Activated naive CD4-positive, alpha-beta T cell treated with anti-CD3 and anti-CD28 coated beads for 36 hours (primary cell): ENCODE measurements at regions of chr1 and their contacts with region 1.

Region 1: GRCh38 chr1:246689409-246690008 is 34.7 kb upstream of the SCCPDH start:
- DNase-seq: peak; percentile 52
- H3K4me3 Mint-ChIP-seq: no peak overlapping the region
- H3K27ac Mint-ChIP-seq: no peak overlapping the region
- H3K4me1 Mint-ChIP-seq: peaks cover 2% of the 10 kb centered on the region
- H3K27me3 Mint-ChIP-seq: no peaks in the 10 kb centered on the region

Region 2: DNA sequence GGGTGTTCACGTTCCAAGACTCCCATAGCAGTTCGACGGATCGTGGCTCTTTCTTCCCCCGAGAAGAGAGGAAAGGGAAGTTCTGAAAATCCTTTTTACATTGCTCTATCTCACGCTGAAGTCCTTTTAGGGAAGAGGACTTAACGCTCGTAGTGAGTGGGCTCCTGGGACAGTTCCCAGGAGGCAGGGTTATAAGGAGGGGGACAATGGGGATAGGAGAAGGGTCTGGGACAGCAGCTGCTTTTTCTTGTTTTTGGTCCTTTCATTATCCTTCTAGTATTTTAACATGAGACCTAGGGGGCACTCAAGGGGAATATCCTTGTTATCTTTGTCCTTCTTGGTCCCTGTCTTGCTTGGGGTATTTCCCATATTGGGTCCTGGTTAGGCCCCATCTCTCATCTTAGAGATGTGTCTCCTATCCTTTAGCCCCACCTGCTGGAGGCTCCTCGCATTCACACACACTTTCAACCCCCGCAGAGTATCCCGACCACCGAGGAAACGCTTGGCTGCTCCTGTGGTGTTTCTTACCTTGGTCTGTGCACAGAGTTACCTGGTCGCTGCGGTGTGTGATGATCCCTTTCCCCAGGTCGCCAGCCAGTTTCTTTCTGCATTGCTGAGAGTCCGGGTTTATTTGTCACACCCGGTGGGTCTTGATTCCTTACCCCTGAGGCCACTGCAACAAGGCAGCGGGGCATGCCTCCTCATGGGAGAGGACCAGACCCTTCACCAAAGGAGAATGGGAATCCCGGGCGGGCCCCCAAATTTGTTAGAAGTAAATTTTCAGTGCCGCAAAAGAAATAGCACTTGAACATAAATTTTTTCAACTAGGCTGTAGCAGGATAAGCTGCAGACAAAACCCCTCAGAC is 64.4 kb after region 1 on chr1:
- CTCF ChIA-PET with region 1: interaction called, 4 read pairs
- intact Hi-C with region 1: loop called (anchors 1 kb)
- DNase-seq: peak; percentile 72
- H3K4me3 Mint-ChIP-seq: no peak overlapping the region
- H3K27ac Mint-ChIP-seq: no peak overlapping the region
- H3K4me1 Mint-ChIP-seq: no peaks in the 10 kb centered on the region
- H3K27me3 Mint-ChIP-seq: no peaks in the 10 kb centered on the region

Region 3: DNA sequence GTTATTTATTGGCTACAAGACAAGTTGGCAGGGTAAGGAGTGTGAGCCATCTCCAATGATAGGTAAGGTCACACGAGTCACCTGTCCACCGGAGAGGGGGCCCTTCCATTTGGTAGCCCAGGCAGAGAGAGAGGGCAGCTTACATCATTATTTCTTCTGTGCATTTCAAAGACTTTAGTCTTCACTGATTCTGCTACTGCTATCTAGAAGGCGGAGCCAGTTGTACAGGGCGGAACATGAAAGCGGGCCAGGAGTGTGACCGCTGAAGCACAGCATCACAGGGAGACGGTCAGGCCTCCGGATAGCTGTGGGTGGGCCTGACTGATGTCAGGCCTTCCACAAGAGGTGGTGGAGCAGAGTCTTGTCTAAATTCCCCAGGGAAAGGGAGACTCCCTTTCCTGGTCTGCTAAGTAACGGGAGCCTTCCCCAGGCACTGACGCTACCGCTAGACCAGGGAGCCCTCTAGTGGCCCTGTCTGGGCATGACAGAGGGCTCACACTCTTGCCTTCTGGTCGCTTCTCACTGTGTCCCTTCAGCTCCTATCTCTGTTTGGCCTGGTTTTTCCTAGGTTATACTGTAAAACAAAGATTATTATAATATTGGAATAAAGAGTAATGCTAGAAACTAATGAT is 281.7 kb after region 1 on chr1:
- CTCF ChIA-PET with region 1: no interaction called
- intact Hi-C with region 1: loop called (anchors 2 kb)
- DNase-seq: peak; percentile 55
- H3K4me3 Mint-ChIP-seq: no peak overlapping the region
- H3K27ac Mint-ChIP-seq: no peak overlapping the region
- H3K4me1 Mint-ChIP-seq: no peaks in the 10 kb centered on the region
- H3K27me3 Mint-ChIP-seq: peaks cover 3% of the 10 kb centered on the region

Region 4: GRCh38 chr1:247198781-247199180 is 509.3 kb after region 1 on chr1:
- CTCF ChIA-PET with region 1: no interaction called
- intact Hi-C with region 1: no loop called
- DNase-seq: no peak
- H3K4me3 Mint-ChIP-seq: no peak overlapping the region
- H3K27ac Mint-ChIP-seq: no peak overlapping the region
- H3K4me1 Mint-ChIP-seq: no peaks in the 10 kb centered on the region
- H3K27me3 Mint-ChIP-seq: no peaks in the 10 kb centered on the region